Heart left ventricle (tissue), 16 donors: ENCODE measurements at regions of chr5 and their contacts with region 1.

Region 1: GRCh38 chr5:68319316-68320093 is 103.9 kb downstream of the PIK3R1 start:
- DNase-seq: no peak
- ATAC-seq: no peak
- H3K4me3 ChIP-seq: no peak overlapping the region
- H3K27ac ChIP-seq: no peak overlapping the region
- H3K4me1 ChIP-seq: peaks cover 0 to 5% (median 0%) of the 10 kb centered on the region in 12 donors
- H3K27me3 ChIP-seq: peaks cover 0 to 2% (median 0%) of the 10 kb centered on the region in 9 donors
- CTCF ChIP-seq: no peak
- POLR2A ChIP-seq: no peak

Region 2: GRCh38 chr5:68419637-68420452 is 100.3 kb after region 1 on chr5:
- intact Hi-C with region 1: loop called in 1 of 10 experiments (anchors 10 kb)
- DNase-seq: peak in 1 of 5 donors; percentile 30
- ATAC-seq: peak in 2 of 4 donors; percentile 54 to 67
- H3K4me3 ChIP-seq: no peak overlapping the region
- H3K27ac ChIP-seq: no peak overlapping the region
- H3K4me1 ChIP-seq: peaks cover 0 to 32% (median 20%) of the 10 kb centered on the region in 12 donors
- H3K27me3 ChIP-seq: no peaks in the 10 kb centered on the region
- CTCF ChIP-seq: no peak
- POLR2A ChIP-seq: no peak